Endothelial cell of umbilical vein (primary cell): ENCODE measurements at regions of chr9 and their contacts with region 1.

Region 1: DNA sequence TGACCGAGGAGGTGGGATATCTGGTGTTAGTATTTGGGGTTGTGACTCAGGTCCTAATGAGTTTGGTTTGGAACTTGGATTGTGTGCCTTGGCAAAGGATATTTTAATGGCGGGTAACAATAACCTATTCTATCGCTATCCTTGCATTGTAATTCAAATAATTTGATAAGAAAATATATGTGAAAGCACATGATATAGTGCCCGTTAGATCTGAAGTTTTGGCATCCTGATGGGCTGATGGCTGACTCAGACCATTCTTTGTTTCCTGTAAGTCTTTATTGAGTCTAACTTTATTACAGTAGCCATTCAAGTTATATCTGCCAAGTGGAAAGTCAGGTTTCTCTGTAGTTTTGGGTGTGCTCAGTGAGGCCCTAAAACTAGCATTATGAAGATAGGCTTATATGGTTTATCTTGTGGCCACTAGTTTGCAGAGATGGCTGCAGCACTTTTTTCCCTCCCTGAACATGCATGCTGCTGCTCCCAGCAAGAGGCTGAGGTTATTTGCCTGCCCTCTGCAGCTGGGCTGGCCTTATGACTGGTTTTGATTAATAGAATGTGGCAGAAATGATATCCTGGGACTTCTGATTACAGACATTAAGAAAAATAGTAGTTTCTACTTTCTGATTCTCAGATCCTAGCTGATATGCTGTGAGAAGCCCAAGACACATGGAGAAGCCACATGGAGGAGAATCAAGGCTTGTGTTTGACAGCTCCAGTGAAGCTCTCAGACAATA is 46.6 kb downstream of the CFAP95 start:
- DNase-seq: peak; percentile 84
- H3K4me3 ChIP-seq: no peak overlapping the region
- H3K27ac ChIP-seq: no peak overlapping the region
- H3K4me1 ChIP-seq: peaks cover 19% of the 10 kb centered on the region
- H3K27me3 ChIP-seq: peaks cover 13 to 26% of the 10 kb centered on the region in 2 experiments
- CTCF ChIP-seq: no peak
- POLR2A ChIP-seq: peak; percentile 52

Region 2: GRCh38 chr9:69816735-69817134 is 50.5 kb before region 1 on chr9:
- CTCF ChIA-PET with region 1: interaction called, 4 read pairs
- POLR2A ChIA-PET with region 1: no interaction called
- dilution Hi-C with region 1: no loop called
- intact Hi-C with region 1: loop called (anchors 2 kb)
- DNase-seq: no peak
- H3K4me3 ChIP-seq: no peak overlapping the region
- H3K27ac ChIP-seq: no peak overlapping the region
- H3K4me1 ChIP-seq: peaks cover 9% of the 10 kb centered on the region
- H3K27me3 ChIP-seq: peaks cover 63 to 89% of the 10 kb centered on the region in 2 experiments
- CTCF ChIP-seq: no peak
- POLR2A ChIP-seq: no peak

Region 3: GRCh38 chr9:69857131-69857530 is 10.1 kb before region 1 on chr9:
- CTCF ChIA-PET with region 1: interaction called, 4 read pairs
- POLR2A ChIA-PET with region 1: no interaction called
- dilution Hi-C with region 1: no loop called
- intact Hi-C with region 1: loop called (anchors 1 kb)
- DNase-seq: peak; percentile 67
- H3K4me3 ChIP-seq: no peak overlapping the region
- H3K27ac ChIP-seq: no peak overlapping the region
- H3K4me1 ChIP-seq: peaks cover 24% of the 10 kb centered on the region
- H3K27me3 ChIP-seq: peaks cover 3 to 8% of the 10 kb centered on the region in 2 experiments
- CTCF ChIP-seq: no peak
- POLR2A ChIP-seq: no peak

Region 4: DNA sequence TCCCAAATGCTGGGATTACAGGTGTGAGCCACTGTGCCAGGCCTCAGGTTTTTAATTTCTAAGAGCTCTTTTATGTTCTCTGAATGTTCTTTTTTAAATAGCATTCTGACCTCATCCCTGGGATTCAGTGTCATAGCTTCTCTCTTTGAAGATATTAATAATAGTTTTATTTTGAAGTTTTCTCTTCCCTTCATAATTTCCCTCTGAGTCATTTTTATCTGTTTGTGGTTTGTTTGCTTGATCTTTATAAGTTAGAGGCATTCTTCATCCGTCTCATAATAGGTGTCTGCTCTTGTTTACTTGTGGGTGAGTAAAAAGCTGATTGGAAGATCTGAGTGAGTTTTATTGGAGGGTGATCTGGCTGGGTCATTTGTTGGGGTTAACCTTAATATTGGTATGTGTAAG is 163.9 kb after region 1 on chr9:
- CTCF ChIA-PET with region 1: no interaction called
- POLR2A ChIA-PET with region 1: no interaction called
- dilution Hi-C with region 1: no loop called
- intact Hi-C with region 1: no loop called
- DNase-seq: peak; percentile 32
- H3K4me3 ChIP-seq: no peak overlapping the region
- H3K27ac ChIP-seq: no peak overlapping the region
- H3K4me1 ChIP-seq: no peaks in the 10 kb centered on the region
- H3K27me3 ChIP-seq: no peaks in the 10 kb centered on the region
- CTCF ChIP-seq: no peak
- POLR2A ChIP-seq: no peak

Region 5: GRCh38 chr9:70195456-70195855 is 328.2 kb after region 1 on chr9:
- CTCF ChIA-PET with region 1: no interaction called
- POLR2A ChIA-PET with region 1: no interaction called
- dilution Hi-C with region 1: no loop called
- intact Hi-C with region 1: no loop called
- DNase-seq: no peak
- H3K4me3 ChIP-seq: no peak overlapping the region
- H3K27ac ChIP-seq: no peak overlapping the region
- H3K4me1 ChIP-seq: no peaks in the 10 kb centered on the region
- H3K27me3 ChIP-seq: no peaks in the 10 kb centered on the region
- CTCF ChIP-seq: no peak
- POLR2A ChIP-seq: no peak

Region 6: DNA sequence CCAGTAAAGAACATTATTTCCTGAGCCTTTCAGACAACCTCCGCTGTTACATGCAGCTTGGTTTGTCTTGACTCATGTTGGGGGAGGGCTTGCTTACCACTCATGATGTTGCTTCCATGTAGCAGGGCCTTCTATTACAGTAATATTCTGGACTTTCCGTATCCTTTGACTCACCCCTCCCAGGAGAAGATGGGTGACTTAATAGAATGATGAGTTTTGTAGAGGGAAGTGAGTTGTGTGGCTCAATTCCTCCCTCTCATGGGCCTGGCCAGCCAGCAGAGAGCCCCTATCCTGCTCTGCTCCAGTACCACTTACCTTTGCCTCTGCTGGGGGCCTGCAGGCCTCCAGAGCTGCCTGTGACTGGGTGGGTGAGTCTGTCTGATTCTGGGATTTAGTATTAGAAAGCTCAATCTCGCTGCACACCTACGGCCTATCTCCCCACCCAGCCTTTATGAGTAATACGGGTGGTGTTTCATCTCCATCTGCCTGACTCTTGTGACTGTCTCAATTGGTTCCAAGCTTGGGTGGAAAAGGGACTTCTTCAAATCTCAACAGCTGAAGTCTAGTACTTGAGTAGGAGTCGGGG is 599.8 kb after region 1 on chr9:
- CTCF ChIA-PET with region 1: no interaction called
- POLR2A ChIA-PET with region 1: no interaction called
- dilution Hi-C with region 1: no loop called
- intact Hi-C with region 1: no loop called
- DNase-seq: peak; percentile 38
- H3K4me3 ChIP-seq: no peak overlapping the region
- H3K27ac ChIP-seq: no peak overlapping the region
- H3K4me1 ChIP-seq: peaks cover 18% of the 10 kb centered on the region
- H3K27me3 ChIP-seq: no peaks in the 10 kb centered on the region
- CTCF ChIP-seq: no peak
- POLR2A ChIP-seq: no peak